ENCODE measurements at regions of chr17 and their contacts with region 1.

Region 1: DNA sequence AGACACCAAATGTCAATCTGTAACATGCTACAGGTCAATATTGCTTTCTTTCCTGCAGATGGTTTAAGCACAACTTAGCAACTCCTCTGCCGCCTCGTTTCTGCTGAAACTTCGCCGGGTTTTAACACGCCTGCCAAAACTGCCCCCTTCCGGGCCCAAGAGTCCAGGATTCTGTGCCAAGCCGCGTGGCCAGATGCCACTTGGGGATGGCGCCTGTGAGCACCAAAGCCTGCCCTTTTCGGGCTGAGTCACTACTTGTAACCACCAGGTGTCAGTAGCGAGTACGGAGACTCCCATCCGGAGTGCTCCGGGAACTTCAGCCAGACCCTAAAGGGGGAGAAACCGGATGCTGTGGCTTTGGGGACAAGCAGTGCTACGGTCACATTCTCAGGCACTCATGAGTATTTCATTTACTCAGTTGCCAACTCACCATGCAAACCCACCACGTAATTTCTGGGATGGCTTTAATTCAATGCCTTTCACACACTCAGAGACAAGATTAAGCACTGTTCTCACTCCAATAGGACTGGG is 7.8 kb downstream of the PMP22 start:
- DNase-seq: peak; percentile 76
- CTCF ChIP-seq: peak; percentile 86

Region 2: DNA sequence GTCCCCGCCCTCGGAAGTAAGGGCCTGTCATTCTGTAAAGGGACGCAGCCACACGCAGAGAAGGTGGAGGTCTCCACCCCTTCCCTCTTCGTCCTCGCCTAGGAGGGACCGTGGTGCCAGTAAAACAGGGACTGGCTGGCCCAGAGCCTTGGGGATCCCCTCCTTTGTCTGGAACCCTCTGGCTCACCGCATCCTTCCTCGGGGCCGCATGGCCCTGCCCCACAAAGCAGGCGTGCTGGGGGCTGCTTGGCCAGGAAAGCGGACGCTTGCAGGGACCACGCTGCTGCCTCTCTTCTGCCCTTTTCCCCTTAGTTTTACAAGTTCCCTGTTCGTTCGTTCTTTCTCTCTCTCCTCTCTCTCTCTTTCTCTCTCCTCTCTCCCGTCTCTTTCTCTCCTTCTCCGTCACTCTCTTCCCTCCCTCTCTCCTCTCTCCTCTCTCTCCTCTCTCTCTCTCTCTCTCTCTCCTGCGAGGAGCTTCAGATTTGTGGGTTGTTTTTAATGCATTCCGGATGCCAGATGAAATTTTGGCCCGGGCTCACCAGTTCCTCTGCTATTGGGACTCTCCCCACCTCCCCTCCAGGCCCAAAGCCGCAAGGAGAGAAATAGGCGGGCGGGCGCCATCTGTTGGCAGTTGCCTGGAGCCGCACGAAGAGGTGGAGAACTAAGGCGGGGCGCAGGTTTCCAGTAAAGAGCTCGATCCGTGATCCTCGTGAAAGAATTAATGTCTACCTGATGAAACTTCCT is 245.2 kb after region 1 on chr17:
- in situ Hi-C with region 1: loop called (anchors 25 kb)
- DNase-seq: peak; percentile 81
- CTCF ChIP-seq: peak; percentile 91